Sigmoid colon (tissue), 7 donors: ENCODE measurements at regions of chr1 and their contacts with region 1.

Region 1: DNA sequence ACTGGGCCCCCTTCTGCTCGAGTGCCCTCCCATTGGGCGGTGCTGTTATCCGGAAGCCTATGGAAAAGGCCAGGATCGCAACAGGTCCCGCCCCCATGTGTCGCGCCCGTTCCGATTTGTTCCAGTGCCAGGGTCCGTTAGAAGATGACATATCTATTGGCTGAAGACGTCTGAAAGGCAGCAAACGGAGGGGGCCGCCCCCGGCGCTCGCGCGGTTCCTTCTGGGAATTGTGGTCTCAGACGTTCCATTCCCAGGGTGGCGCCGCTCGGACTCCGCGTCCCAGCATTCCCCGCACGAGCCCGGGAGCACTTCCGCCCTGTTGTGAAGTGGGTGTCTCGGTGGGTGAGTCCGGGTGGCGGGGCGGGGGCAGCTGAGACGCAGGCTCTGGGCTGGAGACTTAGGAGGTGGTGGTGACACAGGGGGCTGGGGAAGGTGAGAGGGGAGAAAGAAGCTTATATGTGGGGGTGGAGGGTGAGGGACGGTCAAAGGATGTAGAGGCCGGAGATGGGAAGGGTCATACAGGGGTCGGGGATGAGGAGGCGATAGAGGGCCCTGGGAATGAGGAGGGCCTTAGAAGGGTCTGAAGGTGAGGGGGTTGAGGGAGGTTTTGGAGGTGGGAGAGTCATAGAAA is at the start of gene ZSCAN20:
- DNase-seq: peak; percentile 99
- H3K4me3 ChIP-seq: peak within 1 kb of the TSS; percentile 52 to 67 (median 66)
- H3K27ac ChIP-seq: peak within 1 kb of the TSS; percentile 77 to 83 (median 82)
- H3K4me1 ChIP-seq: peaks cover 0 to 56% (median 37%) of the 10 kb centered on the region in 4 donors
- H3K27me3 ChIP-seq: no peaks in the 10 kb centered on the region
- CTCF ChIP-seq: no peak
- EP300 ChIP-seq: peak in 1 of 4 donors; percentile 69
- POLR2A ChIP-seq: no peak
- total RNA-seq, gene ZSCAN20: 5.8 to 8.2 (median 6.8) TPM

Region 2: DNA sequence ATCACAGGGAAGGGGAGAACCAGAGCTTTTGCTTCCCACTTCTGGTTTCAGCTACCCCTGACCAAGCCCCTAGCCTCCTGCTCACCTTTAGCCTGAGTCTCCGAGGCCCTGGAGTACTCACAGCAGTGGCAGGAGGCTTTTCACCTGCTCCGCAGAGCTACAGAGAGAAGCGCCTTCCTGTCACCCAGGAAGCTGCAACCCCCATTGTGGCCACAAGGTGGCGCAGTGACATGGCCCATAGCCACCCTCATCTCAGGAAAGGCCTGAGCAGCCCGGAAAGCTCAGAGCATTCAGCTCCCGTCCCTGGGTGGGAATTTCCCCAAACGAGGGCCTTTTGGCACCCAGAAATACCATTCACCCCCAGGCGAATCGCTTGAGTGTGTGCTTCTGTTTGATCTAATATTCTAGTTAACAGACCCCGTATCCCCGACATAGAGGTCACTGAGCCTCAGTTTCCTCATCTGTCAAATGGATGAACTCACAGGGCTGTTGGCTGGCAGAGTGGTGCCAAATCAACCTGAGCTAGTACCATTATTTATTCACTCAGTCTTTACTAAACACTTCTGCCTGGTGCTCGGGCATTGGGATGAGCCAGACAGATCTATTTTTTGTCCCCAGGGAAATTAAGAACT is 176.9 kb before region 1 on chr1:
- intact Hi-C with region 1: loop called (anchors 1 kb)
- DNase-seq: peak; percentile 92
- H3K4me3 ChIP-seq: no peak overlapping the region
- H3K27ac ChIP-seq: peak overlapping the region; percentile 41 to 53 (median 48)
- H3K4me1 ChIP-seq: peaks cover 0 to 31% (median 20%) of the 10 kb centered on the region in 4 donors
- H3K27me3 ChIP-seq: no peaks in the 10 kb centered on the region
- CTCF ChIP-seq: peak; percentile 95 to 99 (median 98)
- EP300 ChIP-seq: no peak
- POLR2A ChIP-seq: no peak

Region 3: DNA sequence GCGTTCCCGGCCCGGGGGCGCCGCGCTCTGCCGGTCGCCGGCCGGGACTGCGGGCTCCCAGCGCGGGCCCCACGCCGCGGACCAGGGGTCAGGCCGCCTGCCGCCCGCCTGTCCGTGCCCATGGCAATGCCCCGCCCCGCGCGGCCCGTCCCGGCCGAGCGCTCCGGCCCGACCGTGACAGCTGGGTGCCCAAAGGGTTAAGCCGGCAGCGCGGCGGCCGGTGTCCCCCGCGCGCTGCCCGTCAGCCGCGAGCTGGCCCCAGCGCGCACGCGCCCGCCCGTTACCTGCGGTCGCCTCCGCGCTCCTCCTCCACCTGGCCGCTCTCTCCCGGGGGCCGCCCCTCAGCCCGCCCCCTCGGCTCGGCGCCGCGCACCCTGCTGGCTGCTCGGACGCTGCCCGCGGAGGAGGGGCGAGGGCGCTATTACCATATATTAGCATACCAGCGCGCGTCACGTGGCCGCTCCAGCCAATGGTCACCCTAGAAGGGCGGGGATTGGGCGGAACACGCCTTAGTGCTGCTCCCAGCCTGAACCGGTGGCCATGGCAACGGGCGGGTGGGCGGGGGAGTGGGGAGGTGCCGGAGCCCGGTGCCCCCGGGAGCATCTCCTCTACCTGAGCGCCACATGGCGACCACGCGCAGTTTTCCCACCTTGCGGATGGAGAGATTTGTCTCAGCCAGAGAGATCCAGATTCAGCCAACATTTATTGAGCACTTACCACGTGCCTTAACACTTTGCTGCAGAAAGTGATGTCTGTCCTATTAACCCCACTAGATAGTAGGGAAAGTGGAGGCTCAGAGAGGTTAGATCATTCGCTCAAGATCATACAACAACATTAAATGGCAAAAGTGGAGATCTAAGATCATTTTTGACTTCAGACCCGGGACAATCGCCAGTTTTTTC is 41.5 kb before region 1 on chr1 and contains the start of gene PHC2:
- intact Hi-C with region 1: loop called (anchors 5 kb)
- DNase-seq: peak; percentile 98
- H3K4me3 ChIP-seq: peak within 1 kb of the TSS; percentile 48 to 94 (median 84)
- H3K27ac ChIP-seq: peak within 1 kb of the TSS; percentile 71 to 87 (median 87)
- H3K4me1 ChIP-seq: peaks cover 0 to 55% (median 47%) of the 10 kb centered on the region in 4 donors
- H3K27me3 ChIP-seq: no peaks in the 10 kb centered on the region
- CTCF ChIP-seq: peak in 2 of 4 experiments; percentile 16 to 24
- EP300 ChIP-seq: no peak
- POLR2A ChIP-seq: no peak
- total RNA-seq, gene PHC2: 96.3 to 199 (median 124) TPM

Region 4: DNA sequence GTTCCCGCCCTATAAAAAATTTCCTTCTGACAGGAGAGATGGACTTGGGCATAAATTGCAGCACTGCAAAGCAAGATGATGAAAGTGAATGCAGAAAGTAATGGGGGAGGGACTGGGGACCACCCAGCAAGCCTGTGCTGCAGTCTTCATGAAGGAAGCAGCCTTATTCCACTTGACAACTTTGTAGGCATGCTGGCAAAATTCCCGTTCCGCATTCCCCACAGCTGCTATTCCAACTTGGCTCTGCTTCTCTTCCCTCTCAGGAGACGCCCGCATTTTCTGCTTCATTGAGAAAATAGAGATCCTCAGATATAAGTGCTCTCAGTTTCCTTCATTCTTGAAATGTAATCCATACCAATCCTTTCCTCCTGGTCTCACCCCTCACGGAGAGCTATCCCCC is 393.8 kb after region 1 on chr1:
- intact Hi-C with region 1: no loop called
- DNase-seq: no peak
- H3K4me3 ChIP-seq: no peak overlapping the region
- H3K27ac ChIP-seq: no peak overlapping the region
- H3K4me1 ChIP-seq: no peaks in the 10 kb centered on the region
- H3K27me3 ChIP-seq: no peaks in the 10 kb centered on the region
- CTCF ChIP-seq: no peak
- EP300 ChIP-seq: no peak
- POLR2A ChIP-seq: no peak

Region 5: DNA sequence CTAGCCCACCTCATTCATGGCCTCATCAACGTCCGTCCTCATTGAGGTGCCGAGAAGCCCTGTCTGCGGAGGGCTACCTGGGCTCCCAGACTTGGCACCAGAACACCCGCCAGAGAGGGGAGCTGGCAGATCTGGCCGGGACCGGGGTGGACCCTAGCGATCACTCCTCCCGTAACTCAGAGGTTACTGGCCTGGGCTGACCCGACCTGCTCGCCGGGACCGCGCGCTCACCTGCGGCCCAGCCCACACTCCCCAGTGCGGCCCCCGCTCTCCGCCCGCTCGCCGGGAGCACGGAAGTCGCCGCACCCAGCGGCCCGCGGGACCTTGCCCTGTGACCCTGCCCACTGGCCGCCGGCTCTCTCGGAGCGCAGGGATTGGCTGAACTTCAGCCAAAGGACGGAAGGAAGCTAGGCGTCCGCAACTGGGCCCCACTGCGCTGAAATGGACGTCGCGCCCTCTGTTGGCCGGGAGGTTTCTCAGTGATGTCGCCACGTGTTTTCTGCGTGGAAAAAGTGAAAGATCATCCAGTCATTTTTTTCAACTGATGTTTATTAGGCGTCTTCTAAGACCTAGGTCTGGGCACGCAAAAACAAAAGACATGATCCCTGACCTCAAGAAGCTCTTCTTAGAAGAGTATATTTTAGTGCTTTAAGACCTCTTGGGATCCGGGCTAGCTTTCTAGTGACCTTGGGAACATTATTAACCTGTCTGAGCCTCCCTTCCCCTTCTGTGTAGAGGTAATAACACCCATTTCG is 1387.2 kb after region 1 on chr1 and contains the start of gene SMIM12:
- intact Hi-C with region 1: loop called (anchors 5 kb)
- DNase-seq: peak; percentile 97
- H3K4me3 ChIP-seq: peak within 1 kb of the TSS; percentile 72 to 98 (median 90)
- H3K27ac ChIP-seq: peak within 1 kb of the TSS; percentile 82 to 94 (median 88)
- H3K4me1 ChIP-seq: peaks cover 0 to 32% (median 26%) of the 10 kb centered on the region in 4 donors
- H3K27me3 ChIP-seq: no peaks in the 10 kb centered on the region
- CTCF ChIP-seq: peak; percentile 68 to 85 (median 75)
- EP300 ChIP-seq: no peak
- POLR2A ChIP-seq: peak; percentile 77 to 84
- total RNA-seq, gene SMIM12: 18.0 to 25.3 (median 23.7) TPM